T-cell (primary cell): ENCODE measurements at regions of chr10 and their contacts with region 1.

Region 1: DNA sequence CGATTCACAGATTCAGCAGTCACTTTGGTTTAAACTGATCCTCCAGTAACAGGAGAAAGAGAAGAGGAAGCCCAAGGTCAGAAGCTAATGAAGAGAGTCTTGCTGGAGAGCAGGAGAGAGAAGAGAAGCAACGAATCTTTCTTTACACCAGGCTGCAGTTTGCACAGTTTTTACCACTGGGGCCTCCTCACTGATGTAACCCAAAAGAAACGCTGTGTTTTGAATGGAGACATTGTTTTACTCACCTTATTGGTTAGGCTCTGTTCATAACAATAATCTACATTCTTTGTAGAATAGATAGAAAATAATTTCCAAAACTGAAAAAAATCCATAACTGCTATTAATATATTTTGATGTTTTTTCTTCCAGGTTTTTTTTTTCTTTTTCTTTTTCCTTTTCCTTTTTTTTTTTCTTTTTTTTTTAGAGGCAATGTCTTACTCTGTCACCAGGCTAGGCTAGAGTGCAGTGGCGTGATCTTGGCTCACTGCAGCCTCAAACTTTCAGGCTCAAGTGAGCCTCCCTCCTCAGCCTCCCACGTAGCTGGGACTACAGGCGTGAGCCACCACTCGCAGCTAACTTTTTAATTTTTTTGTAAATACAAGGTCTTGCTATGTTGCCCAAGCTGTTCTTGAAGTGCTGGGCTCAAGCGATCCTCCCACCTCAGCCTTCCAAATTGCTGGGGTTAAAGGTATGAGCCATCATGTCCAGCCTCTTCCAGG is 27.6 kb downstream of the LYZL1 start:
- DNase-seq: no peak
- ATAC-seq: no peak
- H3K4me3 ChIP-seq: no peak overlapping the region
- H3K4me3 Mint-ChIP-seq: no peak overlapping the region
- H3K27ac ChIP-seq: no peak overlapping the region
- H3K27ac Mint-ChIP-seq: no peak overlapping the region
- H3K4me1 ChIP-seq: no peaks in the 10 kb centered on the region
- H3K4me1 Mint-ChIP-seq: peaks cover 8 to 14% (median 10%) of the 10 kb centered on the region in 3 donors
- H3K27me3 ChIP-seq: peaks cover 0 to 27% of the 10 kb centered on the region in 2 experiments
- H3K27me3 Mint-ChIP-seq: peaks cover 14 to 34% of the 10 kb centered on the region in 2 donors

Region 2: DNA sequence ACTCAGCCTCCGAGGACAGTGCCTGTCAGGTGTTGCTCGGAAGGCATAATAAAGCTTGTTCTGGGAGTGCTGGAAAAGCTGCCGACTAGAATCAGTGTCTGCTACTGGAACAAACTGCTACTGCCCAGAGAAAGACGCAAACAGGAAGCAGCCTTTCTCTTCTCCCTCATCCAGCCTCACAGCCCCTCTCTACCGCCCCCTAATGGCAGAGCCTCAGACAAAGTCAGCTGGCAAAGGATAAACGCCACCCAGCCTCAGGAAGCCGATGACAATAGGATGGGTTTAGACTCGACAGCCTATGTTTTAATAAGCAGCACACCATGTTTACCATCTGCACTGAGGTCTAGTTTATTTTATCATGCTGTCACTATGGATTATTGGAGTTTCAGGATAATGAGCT is 197.1 kb before region 1 on chr10:
- CTCF ChIA-PET with region 1: no interaction called
- POLR2A ChIA-PET with region 1: interaction called in 1 of 2 experiments, 17 read pairs
- DNase-seq: no peak
- ATAC-seq: no peak
- H3K4me3 ChIP-seq: no peak overlapping the region
- H3K4me3 Mint-ChIP-seq: no peak overlapping the region
- H3K27ac ChIP-seq: no peak overlapping the region
- H3K27ac Mint-ChIP-seq: no peak overlapping the region
- H3K4me1 ChIP-seq: no peaks in the 10 kb centered on the region
- H3K4me1 Mint-ChIP-seq: no peaks in the 10 kb centered on the region
- H3K27me3 ChIP-seq: peaks cover 0 to 6% of the 10 kb centered on the region in 2 experiments
- H3K27me3 Mint-ChIP-seq: peaks cover 0 to 3% of the 10 kb centered on the region in 2 donors

Region 3: GRCh38 chr10:29160110-29160669 is 156.3 kb before region 1 on chr10:
- CTCF ChIA-PET with region 1: no interaction called
- POLR2A ChIA-PET with region 1: no interaction called
- DNase-seq: no peak
- ATAC-seq: no peak
- H3K4me3 ChIP-seq: no peak overlapping the region
- H3K4me3 Mint-ChIP-seq: no peak overlapping the region
- H3K27ac ChIP-seq: no peak overlapping the region
- H3K27ac Mint-ChIP-seq: no peak overlapping the region
- H3K4me1 ChIP-seq: no peaks in the 10 kb centered on the region
- H3K4me1 Mint-ChIP-seq: no peaks in the 10 kb centered on the region
- H3K27me3 ChIP-seq: peaks cover 0 to 3% of the 10 kb centered on the region in 2 experiments
- H3K27me3 Mint-ChIP-seq: peaks cover 0 to 8% of the 10 kb centered on the region in 2 donors

Region 4: DNA sequence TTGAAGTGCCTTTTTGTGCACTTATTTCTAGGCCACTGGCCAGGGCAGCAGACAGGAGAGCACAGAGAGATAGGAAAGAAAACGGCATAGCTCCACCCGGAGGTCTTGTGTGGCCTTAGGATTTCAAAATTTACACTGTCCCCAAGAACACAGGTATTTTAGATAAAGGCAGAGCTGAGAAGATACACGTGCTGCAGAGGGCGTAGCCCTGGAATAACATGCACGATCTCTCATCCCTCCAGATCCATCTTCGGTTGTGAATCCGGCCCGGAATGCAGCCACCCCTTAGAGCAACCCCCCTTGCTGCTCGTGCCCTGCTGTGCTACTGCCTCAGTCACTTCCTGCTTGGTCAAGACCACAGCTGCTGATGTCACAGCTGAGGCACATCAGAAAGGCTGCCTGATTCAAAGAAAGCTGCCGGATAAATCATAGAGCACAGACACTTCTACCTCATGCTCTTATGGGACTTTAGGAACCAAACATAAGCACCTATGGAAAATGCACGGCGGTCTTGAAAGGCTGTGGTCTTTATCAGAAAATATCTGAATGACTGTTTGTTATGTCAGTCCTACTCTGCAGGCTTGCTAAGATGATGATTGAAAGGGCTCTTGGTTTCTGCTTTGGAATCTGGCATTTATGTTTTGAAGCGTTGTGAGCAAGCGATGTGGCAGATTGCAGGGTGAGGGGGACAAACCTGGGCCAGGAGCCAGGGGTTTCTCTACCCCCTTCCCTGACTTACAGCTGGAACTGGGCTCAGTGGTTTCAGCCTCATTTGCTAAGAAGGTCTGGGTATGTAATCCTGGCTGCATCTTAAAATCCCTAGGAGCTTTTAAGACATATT is 166.3 kb after region 1 on chr10:
- CTCF ChIA-PET with region 1: no interaction called
- POLR2A ChIA-PET with region 1: no interaction called
- DNase-seq: peak in 13 of 35 experiments; percentile 5 to 34 (median 12)
- ATAC-seq: peak; percentile 74 to 85 (median 78)
- H3K4me3 ChIP-seq: no peak overlapping the region
- H3K4me3 Mint-ChIP-seq: peak overlapping the region in 2 of 3 donors; percentile 13 to 28
- H3K27ac ChIP-seq: no peak overlapping the region
- H3K27ac Mint-ChIP-seq: peak overlapping the region; percentile 52 to 68
- H3K4me1 ChIP-seq: peaks cover 7 to 10% of the 10 kb centered on the region in 2 experiments
- H3K4me1 Mint-ChIP-seq: peaks cover 14 to 31% (median 27%) of the 10 kb centered on the region in 3 donors
- H3K27me3 ChIP-seq: no peaks in the 10 kb centered on the region
- H3K27me3 Mint-ChIP-seq: no peaks in the 10 kb centered on the region